ENCODE measurements at regions of chr11 and their contacts with region 1.

Region 1: GRCh38 chr11:128757235-128757711 is 63.4 kb downstream of the FLI1 start:
- DNase-seq: peak; percentile 90
- ATAC-seq: peak; percentile 82
- H3K4me3 ChIP-seq: peak overlapping the region in 1 of 5 experiments; percentile 25
- H3K4me3 Mint-ChIP-seq: peak overlapping the region; percentile 17
- H3K27ac ChIP-seq: peak overlapping the region; percentile 78 to 79
- H3K27ac Mint-ChIP-seq: peak overlapping the region; percentile 71
- H3K4me1 ChIP-seq: peaks cover 53 to 74% of the 10 kb centered on the region in 2 donors
- H3K4me1 Mint-ChIP-seq: peaks cover 82% of the 10 kb centered on the region
- H3K27me3 ChIP-seq: no peaks in the 10 kb centered on the region
- H3K27me3 Mint-ChIP-seq: no peaks in the 10 kb centered on the region
- CTCF ChIP-seq: peak; percentile 83

Region 2: GRCh38 chr11:128290106-128290840 is 467.0 kb before region 1 on chr11:
- CTCF ChIA-PET with region 1: interaction called, 21 read pairs
- POLR2A ChIA-PET with region 1: interaction called, 4 read pairs
- intact Hi-C with region 1: loop called (anchors 1 kb)
- DNase-seq: peak; percentile 91
- ATAC-seq: peak; percentile 71
- H3K4me3 ChIP-seq: peak overlapping the region in 4 of 5 experiments; percentile 33 to 48 (median 48)
- H3K4me3 Mint-ChIP-seq: peak overlapping the region; percentile 78
- H3K27ac ChIP-seq: peak overlapping the region; percentile 94 to 95
- H3K27ac Mint-ChIP-seq: peak overlapping the region; percentile 99
- H3K4me1 ChIP-seq: peaks cover 73 to 74% of the 10 kb centered on the region in 2 donors
- H3K4me1 Mint-ChIP-seq: peaks cover 95% of the 10 kb centered on the region
- H3K27me3 ChIP-seq: no peaks in the 10 kb centered on the region
- H3K27me3 Mint-ChIP-seq: no peaks in the 10 kb centered on the region
- CTCF ChIP-seq: peak; percentile 90

Region 3: DNA sequence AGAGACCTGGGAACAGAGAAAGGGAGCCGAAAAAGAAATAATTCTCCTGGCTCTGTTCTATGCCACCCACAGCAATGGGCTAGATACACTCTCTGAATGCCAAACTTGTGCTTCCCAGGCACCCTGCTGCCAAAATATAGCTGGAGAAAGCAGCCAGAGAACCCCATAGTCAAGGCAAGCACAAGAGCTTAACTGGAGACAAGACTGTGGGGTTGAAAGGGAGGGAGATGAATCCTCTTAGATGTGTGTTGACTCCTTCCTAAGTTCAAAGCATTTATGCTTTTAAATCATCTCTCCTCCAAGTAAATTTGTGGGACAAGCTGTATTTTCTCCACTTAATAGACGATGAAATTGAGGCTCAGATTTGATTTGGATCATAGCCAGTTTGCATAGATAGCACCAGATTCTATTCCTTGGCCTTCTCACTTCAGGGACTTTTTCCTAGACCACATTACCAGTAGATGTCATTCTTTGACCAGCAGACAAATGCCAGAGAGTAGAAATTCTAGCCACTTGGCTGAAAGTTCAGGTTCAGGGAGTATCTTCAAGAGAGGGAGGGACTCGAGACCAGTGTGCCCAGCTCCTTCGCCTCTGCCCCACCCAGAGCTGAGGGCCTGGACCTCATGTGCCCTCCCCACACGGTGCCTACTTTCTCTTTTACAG is 153.4 kb before region 1 on chr11:
- CTCF ChIA-PET with region 1: interaction called, 102 read pairs
- POLR2A ChIA-PET with region 1: no interaction called
- intact Hi-C with region 1: loop called (anchors 1 kb)
- DNase-seq: peak; percentile 63
- ATAC-seq: peak; percentile 69
- H3K4me3 ChIP-seq: no peak overlapping the region
- H3K4me3 Mint-ChIP-seq: peak overlapping the region; percentile 35
- H3K27ac ChIP-seq: peak overlapping the region in 1 of 2 donors; percentile 10
- H3K27ac Mint-ChIP-seq: peak overlapping the region; percentile 72
- H3K4me1 ChIP-seq: peaks cover 55 to 59% of the 10 kb centered on the region in 2 donors
- H3K4me1 Mint-ChIP-seq: peaks cover 72% of the 10 kb centered on the region
- H3K27me3 ChIP-seq: no peaks in the 10 kb centered on the region
- H3K27me3 Mint-ChIP-seq: no peaks in the 10 kb centered on the region
- CTCF ChIP-seq: no peak

Region 4: DNA sequence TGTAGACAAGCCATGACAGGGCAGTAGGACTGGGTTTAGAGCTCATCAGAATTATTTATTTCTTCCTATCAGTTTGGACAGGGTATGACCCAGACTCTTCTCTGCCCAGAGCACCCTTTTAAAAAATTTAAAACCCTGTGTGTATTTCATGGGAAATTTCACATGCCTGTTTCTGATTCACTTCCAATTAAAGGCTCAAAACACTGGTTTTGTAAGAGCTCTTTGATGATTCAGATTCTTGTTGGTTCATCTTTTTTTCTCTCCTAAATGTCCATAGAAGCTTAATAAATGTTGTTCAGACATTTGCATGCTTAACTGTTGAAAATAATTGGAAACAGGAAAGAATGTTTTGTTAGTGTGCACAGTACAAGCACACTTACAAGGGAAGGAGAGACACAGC is 49.6 kb before region 1 on chr11:
- CTCF ChIA-PET with region 1: interaction called, 14 read pairs
- POLR2A ChIA-PET with region 1: no interaction called
- intact Hi-C with region 1: no loop called
- DNase-seq: no peak
- ATAC-seq: no peak
- H3K4me3 ChIP-seq: no peak overlapping the region
- H3K4me3 Mint-ChIP-seq: no peak overlapping the region
- H3K27ac ChIP-seq: peak overlapping the region in 1 of 2 donors; percentile 52
- H3K27ac Mint-ChIP-seq: peak overlapping the region; percentile 51
- H3K4me1 ChIP-seq: peaks cover 77 to 88% of the 10 kb centered on the region in 2 donors
- H3K4me1 Mint-ChIP-seq: peaks cover 92% of the 10 kb centered on the region
- H3K27me3 ChIP-seq: no peaks in the 10 kb centered on the region
- H3K27me3 Mint-ChIP-seq: no peaks in the 10 kb centered on the region
- CTCF ChIP-seq: no peak

Region 5: GRCh38 chr11:128733440-128734102 is 23.7 kb before region 1 on chr11:
- CTCF ChIA-PET with region 1: interaction called, 38 read pairs
- POLR2A ChIA-PET with region 1: interaction called, 4 read pairs
- intact Hi-C with region 1: loop called (anchors 2 kb)
- DNase-seq: peak; percentile 34
- ATAC-seq: peak; percentile 22
- H3K4me3 ChIP-seq: peak overlapping the region in 4 of 5 experiments; percentile 3 to 41 (median 14)
- H3K4me3 Mint-ChIP-seq: peak overlapping the region; percentile 82
- H3K27ac ChIP-seq: peak overlapping the region; percentile 66 to 80
- H3K27ac Mint-ChIP-seq: peak overlapping the region; percentile 96
- H3K4me1 ChIP-seq: peaks cover 99% of the 10 kb centered on the region in 2 donors
- H3K4me1 Mint-ChIP-seq: peaks cover 94% of the 10 kb centered on the region
- H3K27me3 ChIP-seq: no peaks in the 10 kb centered on the region
- H3K27me3 Mint-ChIP-seq: no peaks in the 10 kb centered on the region
- CTCF ChIP-seq: no peak

Region 6: GRCh38 chr11:128848815-128849455 is 91.7 kb after region 1 on chr11:
- CTCF ChIA-PET with region 1: interaction called, 15 read pairs
- POLR2A ChIA-PET with region 1: no interaction called
- intact Hi-C with region 1: loop called (anchors 5 kb)
- DNase-seq: peak; percentile 77
- ATAC-seq: peak; percentile 72
- H3K4me3 ChIP-seq: no peak overlapping the region
- H3K4me3 Mint-ChIP-seq: no peak overlapping the region
- H3K27ac ChIP-seq: no peak overlapping the region
- H3K27ac Mint-ChIP-seq: peak overlapping the region; percentile 65
- H3K4me1 ChIP-seq: peaks cover 45 to 60% of the 10 kb centered on the region in 2 donors
- H3K4me1 Mint-ChIP-seq: peaks cover 52% of the 10 kb centered on the region
- H3K27me3 ChIP-seq: no peaks in the 10 kb centered on the region
- H3K27me3 Mint-ChIP-seq: no peaks in the 10 kb centered on the region
- CTCF ChIP-seq: peak; percentile 91

Region 7: GRCh38 chr11:128965485-128965884 is 208.2 kb after region 1 on chr11:
- CTCF ChIA-PET with region 1: no interaction called
- POLR2A ChIA-PET with region 1: no interaction called
- intact Hi-C with region 1: no loop called
- DNase-seq: peak; percentile 41
- ATAC-seq: peak; percentile 56
- H3K4me3 ChIP-seq: no peak overlapping the region
- H3K4me3 Mint-ChIP-seq: peak overlapping the region; percentile 50
- H3K27ac ChIP-seq: no peak overlapping the region
- H3K27ac Mint-ChIP-seq: peak overlapping the region; percentile 18
- H3K4me1 ChIP-seq: peaks cover 6 to 7% of the 10 kb centered on the region in 2 donors
- H3K4me1 Mint-ChIP-seq: peaks cover 12% of the 10 kb centered on the region
- H3K27me3 ChIP-seq: no peaks in the 10 kb centered on the region
- H3K27me3 Mint-ChIP-seq: peaks cover 9% of the 10 kb centered on the region
- CTCF ChIP-seq: no peak

Region 8: DNA sequence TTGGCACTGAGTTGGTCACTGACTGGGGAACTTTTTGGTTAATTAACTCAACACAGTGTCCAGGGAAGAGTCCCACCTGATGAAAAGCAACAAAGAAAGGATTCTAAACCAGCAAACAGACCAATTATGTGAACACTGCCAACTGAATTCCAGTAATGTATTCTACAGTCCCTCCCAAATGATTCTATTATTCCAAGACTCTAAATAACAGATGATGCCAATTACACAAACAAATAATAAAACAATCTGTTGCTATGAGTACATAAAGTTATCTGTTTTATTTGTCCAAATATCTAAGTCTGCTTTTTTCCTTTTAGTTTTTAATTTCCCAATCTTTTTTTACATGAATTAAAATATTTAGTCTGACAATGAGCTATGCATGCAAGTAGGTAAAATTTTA is 283.7 kb after region 1 on chr11:
- CTCF ChIA-PET with region 1: no interaction called
- POLR2A ChIA-PET with region 1: no interaction called
- intact Hi-C with region 1: no loop called
- DNase-seq: no peak
- ATAC-seq: no peak
- H3K4me3 ChIP-seq: no peak overlapping the region
- H3K4me3 Mint-ChIP-seq: no peak overlapping the region
- H3K27ac ChIP-seq: no peak overlapping the region
- H3K27ac Mint-ChIP-seq: no peak overlapping the region
- H3K4me1 ChIP-seq: no peaks in the 10 kb centered on the region
- H3K4me1 Mint-ChIP-seq: no peaks in the 10 kb centered on the region
- H3K27me3 ChIP-seq: no peaks in the 10 kb centered on the region
- H3K27me3 Mint-ChIP-seq: no peaks in the 10 kb centered on the region
- CTCF ChIP-seq: no peak

Measured in B cell (primary cell).